GM18951 (cell line): ENCODE measurements at regions of chr15 and their contacts with region 1.

Region 1: DNA sequence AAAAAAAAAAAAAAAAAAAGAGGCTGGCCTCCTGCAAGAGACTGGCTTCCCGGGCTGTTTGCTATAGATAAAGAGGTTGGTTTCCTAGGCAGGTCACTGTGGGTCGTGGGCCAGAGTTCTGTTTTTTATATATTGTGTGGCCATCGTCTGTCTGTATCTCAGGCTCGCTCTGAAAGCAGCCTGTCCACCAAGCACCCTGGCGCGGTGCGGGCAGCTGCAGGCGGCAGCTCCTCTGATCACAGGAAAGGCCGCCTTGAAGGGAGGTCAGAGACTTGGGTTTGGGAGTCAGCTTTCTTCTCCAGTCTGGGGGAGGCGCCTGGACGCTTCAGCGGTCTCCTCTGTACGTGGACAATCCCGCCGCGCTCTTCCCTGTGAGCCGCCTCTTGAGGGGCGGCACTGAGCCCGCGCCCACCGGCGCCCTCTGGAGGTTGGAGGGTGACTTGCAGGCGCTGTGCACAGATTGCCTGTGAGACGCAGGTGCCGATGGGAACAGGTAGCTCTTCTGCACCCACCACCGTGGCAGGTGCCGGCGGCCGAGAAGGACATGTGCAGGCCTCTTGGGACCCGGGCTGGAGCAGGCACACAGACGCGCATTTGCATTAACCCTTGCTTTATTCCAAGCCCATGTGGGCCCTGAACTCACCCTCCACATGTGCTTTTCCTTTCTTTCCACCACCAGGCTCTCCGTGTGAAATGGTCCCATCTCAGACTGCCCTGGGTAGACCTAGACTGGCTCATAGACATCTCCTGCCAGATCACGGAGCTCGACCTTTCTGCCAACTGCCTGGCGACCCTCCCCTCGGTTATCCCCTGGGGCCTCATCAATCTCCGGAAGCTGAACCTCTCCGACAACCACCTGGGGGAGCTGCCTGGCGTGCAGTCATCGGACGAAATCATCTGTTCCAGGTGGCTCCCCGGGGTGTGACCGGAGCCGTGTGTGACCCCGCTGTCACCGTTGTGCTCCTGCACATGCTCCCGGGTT is 89.3 kb downstream of the LRRK1 start:
- POLR2A ChIP-seq: no peak

Region 2: DNA sequence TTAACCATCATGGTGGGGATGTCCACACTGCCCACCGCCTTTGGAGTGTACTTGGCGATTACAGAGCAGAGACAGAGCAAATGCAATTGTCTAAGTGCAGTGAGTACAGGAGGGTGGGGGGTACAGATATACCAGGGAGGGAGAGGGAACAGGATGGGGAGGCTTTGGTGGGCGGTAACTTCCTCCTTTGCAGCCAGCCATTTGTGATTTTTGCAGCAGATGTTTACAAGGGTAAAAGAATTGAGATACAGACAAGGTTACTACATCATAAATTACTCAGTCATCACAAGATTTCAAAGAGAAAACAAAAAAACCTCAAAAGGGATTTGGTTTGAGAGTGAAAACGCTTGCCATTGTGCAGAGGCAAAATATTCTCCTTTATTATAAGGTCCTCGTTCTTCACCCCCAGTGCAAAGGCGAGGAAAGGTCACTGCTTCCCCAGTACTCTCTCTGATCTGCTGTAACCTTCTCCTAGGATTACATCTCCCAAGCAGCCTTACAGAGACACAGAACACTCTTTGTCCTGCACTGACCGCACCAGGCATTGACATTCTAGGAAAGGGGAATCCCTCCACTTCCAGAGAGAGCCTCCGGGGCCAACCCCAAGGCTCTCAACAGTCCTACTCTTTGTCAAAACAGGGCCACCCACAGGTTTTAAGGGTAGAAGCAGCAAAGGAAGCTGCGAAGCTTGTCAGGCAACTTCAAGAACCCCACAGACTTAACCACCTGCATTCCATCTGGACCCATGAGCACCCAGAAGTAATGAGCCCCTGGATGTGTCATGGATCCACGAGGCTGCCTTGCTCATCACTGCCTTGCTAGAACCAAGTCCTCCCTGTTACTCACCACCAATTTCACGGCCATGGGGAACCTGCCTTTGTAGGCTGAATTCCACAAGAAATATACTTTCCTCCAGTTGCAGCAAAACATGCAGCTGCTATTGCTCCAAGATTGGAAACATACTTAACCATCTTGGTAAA is 784.0 kb before region 1 on chr15:
- in situ Hi-C with region 1: no loop called
- POLR2A ChIP-seq: no peak

Region 3: GRCh38 chr15:100635406-100636071 is 372.9 kb before region 1 on chr15:
- in situ Hi-C with region 1: loop called (anchors 10 kb)
- POLR2A ChIP-seq: no peak

Region 4: GRCh38 chr15:100918034-100918689 is 90.3 kb before region 1 on chr15:
- in situ Hi-C with region 1: loop called (anchors 5 kb)
- POLR2A ChIP-seq: peak; percentile 51